Ascending aorta (tissue), 2 donors: ENCODE measurements at regions of chr9 and their contacts with region 1.

Region 1: GRCh38 chr9:83622939-83623678 is at the start of gene IDNK:
- DNase-seq: peak in 1 of 2 donors; percentile 80
- H3K4me3 ChIP-seq: peak within 1 kb of the TSS; percentile 67 to 84
- H3K27ac ChIP-seq: peak within 1 kb of the TSS; percentile 85 to 86
- H3K4me1 ChIP-seq: peaks cover 0 to 5% of the 10 kb centered on the region in 2 donors
- H3K27me3 ChIP-seq: no peaks in the 10 kb centered on the region
- CTCF ChIP-seq: no peak
- total RNA-seq, gene IDNK: not detected

Region 2: GRCh38 chr9:83569326-83569725 is 53.8 kb before region 1 on chr9:
- intact Hi-C with region 1: no loop called
- DNase-seq: no peak
- H3K4me3 ChIP-seq: no peak overlapping the region
- H3K27ac ChIP-seq: no peak overlapping the region
- H3K4me1 ChIP-seq: peaks cover 0 to 3% of the 10 kb centered on the region in 2 donors
- H3K27me3 ChIP-seq: no peaks in the 10 kb centered on the region
- CTCF ChIP-seq: no peak

Region 3: GRCh38 chr9:83707768-83708514 is 84.8 kb after region 1 on chr9 and contains the start of gene UBQLN1:
- intact Hi-C with region 1: loop called (anchors 2 kb)
- DNase-seq: peak; percentile 72 to 95
- H3K4me3 ChIP-seq: peak within 1 kb of the TSS; percentile 88 to 96
- H3K27ac ChIP-seq: peak within 1 kb of the TSS; percentile 98 to 99
- H3K4me1 ChIP-seq: no peaks in the 10 kb centered on the region
- H3K27me3 ChIP-seq: no peaks in the 10 kb centered on the region
- CTCF ChIP-seq: no peak
- total RNA-seq, gene UBQLN1: 118 TPM

Region 4: DNA sequence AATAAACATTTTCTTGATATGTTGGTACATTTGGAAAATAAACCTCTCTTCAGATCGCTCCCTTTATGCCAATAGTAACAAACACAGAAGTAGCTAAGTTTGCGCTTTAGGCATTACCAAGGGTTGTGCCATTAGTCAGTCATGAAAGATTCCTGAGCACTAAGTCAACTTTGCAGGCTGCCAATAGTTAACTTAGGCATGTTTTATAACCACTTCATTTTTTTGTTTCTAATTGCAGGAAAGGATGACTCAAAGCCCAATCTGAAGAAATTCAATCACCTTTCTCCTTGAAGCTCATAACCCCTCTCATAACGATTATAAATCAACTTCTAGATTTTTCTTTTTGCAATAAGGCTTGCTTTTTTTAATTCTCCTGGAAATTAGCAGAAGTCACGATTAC is 1601.6 kb after region 1 on chr9:
- intact Hi-C with region 1: loop called (anchors 5 kb)
- DNase-seq: no peak
- H3K4me3 ChIP-seq: no peak overlapping the region
- H3K27ac ChIP-seq: peak overlapping the region; percentile 11 to 29
- H3K4me1 ChIP-seq: peaks cover 0 to 15% of the 10 kb centered on the region in 2 donors
- H3K27me3 ChIP-seq: no peaks in the 10 kb centered on the region
- CTCF ChIP-seq: no peak